Esophagus squamous epithelium (tissue), 5 donors: ENCODE measurements at regions of chr9 and their contacts with region 1.

Region 1: GRCh38 chr9:109903515-109904138 is 123.6 kb downstream of the PALM2AKAP2 start:
- DNase-seq: no peak
- H3K4me3 ChIP-seq: no peak overlapping the region
- H3K27ac ChIP-seq: no peak overlapping the region
- H3K4me1 ChIP-seq: peaks cover 0 to 17% (median 10%) of the 10 kb centered on the region in 3 donors
- H3K27me3 ChIP-seq: no peaks in the 10 kb centered on the region
- CTCF ChIP-seq: peak; percentile 60 to 80 (median 68)
- POLR2A ChIP-seq: no peak

Region 2: DNA sequence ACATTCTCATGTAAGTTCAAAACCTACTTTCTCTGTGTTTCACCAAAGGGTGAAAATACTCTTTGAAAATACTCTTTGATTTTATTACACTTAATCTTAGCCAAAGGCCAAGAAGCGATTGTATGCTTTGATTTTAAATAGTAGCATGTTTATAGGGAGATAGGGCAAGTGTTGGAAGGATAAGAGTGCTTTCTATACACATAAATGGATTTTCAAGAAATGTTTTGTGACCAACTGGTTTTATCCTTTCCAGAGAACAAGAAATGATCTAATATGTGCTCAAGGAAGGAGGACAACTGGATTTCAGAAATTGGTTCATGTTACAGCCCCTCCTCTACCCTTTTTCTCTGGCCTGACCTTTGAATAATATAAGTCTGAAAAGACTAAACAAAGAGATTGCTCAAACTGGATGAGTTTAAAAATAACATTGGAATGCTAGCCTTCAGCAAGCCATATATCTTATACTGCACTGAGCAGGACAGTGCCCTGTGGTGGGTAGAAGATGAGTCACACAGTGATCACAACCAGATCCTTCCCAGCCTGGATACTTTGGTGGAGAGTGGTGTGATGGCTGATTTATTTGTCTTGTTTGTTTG is 110.6 kb before region 1 on chr9:
- intact Hi-C with region 1: no loop called
- DNase-seq: no peak
- H3K4me3 ChIP-seq: no peak overlapping the region
- H3K27ac ChIP-seq: peak overlapping the region in 2 of 4 donors; percentile 30 to 69
- H3K4me1 ChIP-seq: peaks cover 0 to 17% (median 8%) of the 10 kb centered on the region in 3 donors
- H3K27me3 ChIP-seq: peaks cover 0 to 14% (median 0%) of the 10 kb centered on the region in 4 donors
- CTCF ChIP-seq: no peak
- POLR2A ChIP-seq: no peak

Region 3: DNA sequence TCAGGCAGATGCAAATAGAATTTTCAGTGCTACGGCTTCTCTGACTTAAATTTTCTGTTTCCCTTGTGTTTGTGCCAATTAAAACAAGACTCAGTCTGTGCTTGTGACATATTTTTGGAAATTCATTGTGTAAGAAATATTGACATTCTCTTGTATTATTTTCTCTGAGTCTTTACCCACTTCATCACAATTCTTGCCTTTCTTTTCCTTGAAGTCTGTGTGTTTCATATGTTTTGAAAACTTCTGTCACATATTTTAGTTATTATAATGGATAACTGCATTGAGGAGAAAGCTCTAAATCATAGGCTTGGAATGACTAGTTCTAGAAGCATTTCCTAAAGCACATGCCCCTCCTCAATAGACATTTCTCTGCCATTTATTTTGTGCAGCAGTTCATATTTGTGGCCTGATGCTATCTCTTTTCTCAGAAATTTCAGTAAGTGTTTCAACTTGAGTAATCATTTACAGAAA is 82.9 kb after region 1 on chr9:
- intact Hi-C with region 1: no loop called
- DNase-seq: no peak
- H3K4me3 ChIP-seq: no peak overlapping the region
- H3K27ac ChIP-seq: no peak overlapping the region
- H3K4me1 ChIP-seq: no peaks in the 10 kb centered on the region
- H3K27me3 ChIP-seq: no peaks in the 10 kb centered on the region
- CTCF ChIP-seq: no peak
- POLR2A ChIP-seq: no peak

Region 4: DNA sequence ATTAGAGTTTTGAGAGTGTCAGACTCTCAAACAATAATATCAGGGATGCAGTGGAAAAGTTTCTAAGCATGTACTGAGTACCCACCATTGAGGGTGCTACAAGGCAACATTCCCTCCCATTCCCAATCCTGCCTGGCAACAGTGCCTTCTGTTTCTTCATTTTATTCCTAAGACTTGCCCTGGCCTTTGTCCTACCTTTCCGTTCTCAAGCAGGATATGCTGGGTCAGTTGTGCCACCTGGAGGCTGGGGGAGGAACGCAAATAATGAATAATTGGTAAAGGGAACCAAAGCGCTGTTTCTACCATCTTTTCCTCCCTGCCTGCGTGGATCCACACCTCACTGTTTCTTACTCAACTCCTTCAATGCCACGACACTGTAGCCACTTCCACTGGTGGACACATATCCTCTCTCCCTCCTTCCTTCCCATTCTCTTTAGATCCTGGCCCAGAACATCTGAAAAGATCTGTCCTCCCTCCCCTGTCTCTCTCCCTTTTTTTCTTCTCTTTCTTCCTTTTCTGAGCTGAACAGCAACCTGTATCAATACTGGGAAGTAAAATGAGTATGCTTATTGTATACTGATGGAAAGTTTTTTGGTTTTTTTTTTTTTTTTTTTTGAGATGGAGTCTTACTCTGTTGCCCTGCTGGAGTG is 154.8 kb after region 1 on chr9:
- intact Hi-C with region 1: loop called (anchors 5 kb)
- DNase-seq: no peak
- H3K4me3 ChIP-seq: no peak overlapping the region
- H3K27ac ChIP-seq: no peak overlapping the region
- H3K4me1 ChIP-seq: peaks cover 0 to 5% (median 0%) of the 10 kb centered on the region in 3 donors
- H3K27me3 ChIP-seq: no peaks in the 10 kb centered on the region
- CTCF ChIP-seq: peak; percentile 27 to 73 (median 62)
- POLR2A ChIP-seq: no peak

Region 5: DNA sequence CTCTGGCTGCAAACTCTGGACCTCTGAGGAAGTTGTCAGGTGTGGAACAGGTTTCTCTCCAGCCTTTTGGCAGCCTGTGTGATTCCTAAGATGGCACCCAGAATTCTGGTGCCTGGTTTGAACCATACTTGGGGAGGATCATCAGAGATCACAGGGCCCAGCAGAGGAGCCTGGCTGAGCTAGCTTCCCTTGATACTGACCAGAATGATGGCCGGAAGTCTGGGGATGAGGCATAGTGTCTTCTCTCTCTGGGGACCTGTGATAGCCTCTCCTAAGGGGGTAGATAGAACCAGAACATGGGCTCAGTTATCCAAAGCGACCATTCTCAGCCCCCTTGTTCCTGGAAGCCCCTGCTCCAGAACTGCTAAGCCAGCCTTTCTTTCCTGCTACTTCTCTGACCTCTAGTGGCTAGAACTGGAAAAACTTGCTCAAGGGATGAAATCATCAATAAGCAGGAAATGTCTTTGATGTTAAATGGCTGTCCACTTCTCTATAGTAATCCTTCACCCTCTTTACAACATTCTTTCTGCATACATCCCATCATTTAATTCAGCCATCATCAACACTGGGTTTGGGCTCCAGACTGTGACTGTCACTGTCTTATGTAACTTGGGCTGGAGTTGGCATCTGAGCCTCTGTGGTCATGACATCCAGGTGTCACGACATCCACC is 249.2 kb after region 1 on chr9:
- intact Hi-C with region 1: loop called (anchors 5 kb)
- DNase-seq: no peak
- H3K4me3 ChIP-seq: no peak overlapping the region
- H3K27ac ChIP-seq: peak overlapping the region in 2 of 4 donors; percentile 2 to 7
- H3K4me1 ChIP-seq: peaks cover 0 to 62% (median 20%) of the 10 kb centered on the region in 3 donors
- H3K27me3 ChIP-seq: no peaks in the 10 kb centered on the region
- CTCF ChIP-seq: peak; percentile 38 to 70 (median 66)
- POLR2A ChIP-seq: no peak